Mammary epithelial cell (primary cell): ENCODE measurements at regions of chr3 and their contacts with region 1.

Region 1: DNA sequence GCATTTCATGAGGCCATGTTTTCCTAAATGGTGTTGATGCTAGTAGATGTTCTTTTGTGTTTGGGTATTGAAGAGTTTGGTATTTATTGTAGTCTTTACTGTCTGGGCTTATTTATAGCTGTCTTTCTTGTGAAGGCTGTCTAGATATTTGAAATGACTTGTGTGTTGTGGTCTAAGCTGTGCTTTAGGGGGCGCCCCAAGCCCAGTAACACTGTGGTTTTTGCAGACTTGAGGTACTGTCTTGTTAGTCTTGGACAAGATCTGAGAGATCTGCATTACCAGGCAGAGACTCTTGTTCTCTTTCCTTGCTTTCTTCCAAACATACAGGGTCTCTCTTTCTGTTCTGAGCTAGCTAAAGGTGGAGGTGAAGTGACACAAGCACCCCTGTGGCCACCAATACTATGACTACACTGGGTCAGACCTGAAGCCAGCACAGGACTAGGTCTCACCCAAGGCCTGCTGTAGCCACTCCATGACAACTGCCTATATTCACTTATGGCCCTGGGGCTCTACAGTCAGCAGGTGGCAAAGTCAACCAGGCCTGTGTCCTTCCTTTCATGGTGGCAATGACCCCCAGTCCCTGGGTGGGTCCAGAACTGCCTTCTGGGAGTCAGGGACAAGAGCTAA is 152.1 kb upstream of the TBC1D5 start:
- DNase-seq: peak; percentile 47
- H3K4me3 ChIP-seq: no peak overlapping the region
- H3K27ac ChIP-seq: no peak overlapping the region
- H3K4me1 ChIP-seq: no peaks in the 10 kb centered on the region
- H3K27me3 ChIP-seq: no peaks in the 10 kb centered on the region
- CTCF ChIP-seq: peak; percentile 50 to 72

Region 2: DNA sequence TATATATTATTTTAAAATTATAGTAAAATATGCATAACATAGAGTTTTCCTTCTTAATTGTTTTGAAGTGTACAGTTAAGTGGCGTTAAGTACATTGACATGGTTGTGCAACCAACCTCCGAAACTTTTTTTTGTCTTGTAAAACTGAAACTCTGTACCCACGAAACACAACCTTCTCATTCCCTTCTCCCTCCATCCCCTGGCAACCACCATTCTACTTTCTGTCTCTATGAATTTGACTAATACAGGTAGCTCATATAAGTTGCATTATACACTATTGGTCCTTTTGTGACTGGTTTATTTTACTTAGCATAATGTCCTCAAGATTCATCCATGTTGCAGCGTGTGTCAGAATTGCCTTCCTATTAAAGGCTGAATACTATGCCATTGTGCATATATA is 351.2 kb after region 1 on chr3:
- CTCF ChIA-PET with region 1: no interaction called
- dilution Hi-C with region 1: no loop called
- in situ Hi-C with region 1: no loop called
- intact Hi-C with region 1: no loop called
- DNase-seq: no peak
- H3K4me3 ChIP-seq: no peak overlapping the region
- H3K27ac ChIP-seq: no peak overlapping the region
- H3K4me1 ChIP-seq: peaks cover 22% of the 10 kb centered on the region
- H3K27me3 ChIP-seq: no peaks in the 10 kb centered on the region
- CTCF ChIP-seq: no peak

Region 3: DNA sequence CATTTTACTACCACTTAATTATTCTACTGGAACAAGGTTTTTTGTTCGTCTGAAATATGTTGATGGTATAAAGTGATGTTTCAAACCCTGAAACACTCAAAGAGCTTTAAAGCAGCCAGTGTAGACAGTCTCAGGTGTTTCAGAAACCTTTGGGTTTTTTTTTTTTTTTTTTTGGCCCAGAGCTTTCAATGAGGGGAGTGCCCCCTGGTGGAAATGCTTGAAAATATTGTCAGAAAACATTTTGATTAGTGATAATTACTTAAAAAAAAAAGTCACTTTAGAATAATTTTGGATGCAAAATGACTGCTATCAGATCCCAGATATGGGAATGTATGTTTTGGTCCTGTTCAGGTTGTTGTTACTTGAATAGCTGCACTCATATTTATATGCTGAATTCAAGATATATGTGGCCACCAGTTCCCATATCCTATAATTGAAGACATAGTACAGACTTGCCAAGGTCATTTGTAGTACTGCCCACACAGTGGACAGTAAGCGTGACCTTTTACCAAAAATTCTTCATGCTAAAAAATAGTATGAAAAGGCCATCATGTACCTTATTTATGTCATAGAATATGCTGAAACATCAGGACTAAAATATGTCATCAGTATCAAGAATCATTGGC is 494.7 kb after region 1 on chr3:
- CTCF ChIA-PET with region 1: interaction called, 6 read pairs
- dilution Hi-C with region 1: no loop called
- in situ Hi-C with region 1: loop called (anchors 10 to 25 kb)
- intact Hi-C with region 1: loop called (anchors 1 kb)
- DNase-seq: peak; percentile 8
- H3K4me3 ChIP-seq: no peak overlapping the region
- H3K27ac ChIP-seq: no peak overlapping the region
- H3K4me1 ChIP-seq: no peaks in the 10 kb centered on the region
- H3K27me3 ChIP-seq: no peaks in the 10 kb centered on the region
- CTCF ChIP-seq: peak; percentile 26 to 61